ENCODE measurements at regions of chr6 and their contacts with region 1.

Region 1: DNA sequence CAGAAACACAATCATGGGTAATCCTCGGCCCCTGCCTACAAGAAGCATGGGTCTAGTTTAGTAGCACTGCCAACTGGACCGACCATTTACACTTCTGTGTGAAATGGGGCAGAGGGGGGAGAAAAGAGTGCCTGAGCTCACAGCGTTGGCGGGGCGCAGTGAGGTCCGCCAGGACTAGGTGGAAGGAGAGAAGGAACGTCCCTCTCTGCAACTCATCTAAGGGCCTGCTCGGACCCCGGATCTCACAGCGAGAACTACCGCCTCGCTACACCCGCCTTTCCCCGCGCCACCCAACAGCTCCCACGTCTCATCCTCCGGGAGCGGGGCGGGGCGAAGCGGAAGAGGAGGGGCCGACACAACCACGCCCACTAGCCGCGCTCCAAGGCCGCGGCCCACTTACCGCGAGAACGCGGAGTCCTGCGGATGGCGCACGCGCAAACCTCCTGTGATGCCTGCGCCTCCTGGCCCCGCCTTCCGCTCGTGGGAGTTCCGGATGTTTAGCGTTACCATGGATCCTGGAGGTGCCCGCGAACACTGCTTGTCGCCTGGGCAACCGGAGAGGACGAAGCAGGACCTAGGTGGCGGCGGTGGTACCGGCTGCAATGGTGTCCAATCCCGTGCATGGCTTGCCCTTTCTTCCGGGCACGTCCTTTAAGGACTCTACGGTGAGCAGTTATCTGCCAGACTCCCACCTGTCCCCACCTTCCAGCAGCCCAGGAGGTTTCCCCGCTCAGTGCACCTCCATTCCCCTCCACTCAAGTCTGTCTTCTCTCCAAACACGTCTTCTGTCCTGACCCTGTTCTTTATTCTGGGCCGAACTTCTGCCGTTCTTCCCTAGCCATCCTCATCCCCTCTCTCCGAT is at the start of gene EFHC1:
- DNase-seq: peak; percentile 98
- H3K4me3 ChIP-seq: peak within 1 kb of the TSS; percentile 85
- H3K27ac ChIP-seq: peak within 1 kb of the TSS; percentile 88
- H3K27me3 ChIP-seq: no peaks in the 10 kb centered on the region
- CTCF ChIP-seq: no peak

Region 2: DNA sequence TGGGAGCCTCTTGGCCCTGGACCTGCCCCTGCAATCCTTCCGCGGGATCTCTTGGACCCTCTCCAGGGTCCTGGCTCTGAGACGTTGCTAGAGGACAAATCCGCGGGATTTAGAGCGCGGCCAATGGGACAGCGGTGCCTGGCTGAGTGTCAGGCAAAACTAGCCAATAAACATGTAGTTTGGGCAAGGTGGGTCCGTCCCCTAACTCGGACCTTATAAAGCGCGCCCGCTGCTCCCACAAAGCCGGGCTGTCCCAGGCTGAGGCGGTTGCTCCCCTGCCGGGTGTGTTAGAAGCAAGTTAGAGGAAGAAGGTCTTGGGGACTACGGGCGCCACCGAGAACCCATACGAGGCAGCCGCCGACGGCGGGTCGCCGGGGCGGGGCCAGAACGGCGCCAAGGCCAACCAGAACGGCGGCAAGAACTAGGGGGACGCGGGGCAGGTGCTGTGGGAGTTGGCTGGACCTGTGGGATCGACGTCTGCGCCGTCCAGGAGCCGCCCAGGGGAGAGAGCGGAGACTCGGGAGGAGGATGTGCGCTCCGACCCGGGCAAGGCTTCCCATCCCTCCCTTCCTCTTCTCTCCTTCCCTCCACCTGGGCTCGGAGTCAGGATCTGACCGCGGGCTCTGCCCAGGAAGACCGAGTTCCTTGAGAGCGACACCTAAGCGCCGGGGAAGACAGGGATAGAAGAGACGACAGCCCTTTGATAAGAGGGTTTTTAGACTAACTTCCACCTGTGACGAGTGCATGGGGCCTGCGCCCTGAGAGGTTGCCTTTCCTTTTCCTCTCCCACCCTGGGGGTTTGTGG is 244.3 kb after region 1 on chr6:
- in situ Hi-C with region 1: loop called (anchors 25 kb)
- DNase-seq: peak; percentile 95
- H3K4me3 ChIP-seq: peak overlapping the region; percentile 73
- H3K27ac ChIP-seq: peak overlapping the region; percentile 31
- H3K27me3 ChIP-seq: no peaks in the 10 kb centered on the region
- CTCF ChIP-seq: no peak

Region 3: GRCh38 chr6:52681416-52681815 is 261.4 kb after region 1 on chr6:
- in situ Hi-C with region 1: no loop called
- DNase-seq: no peak
- H3K4me3 ChIP-seq: no peak overlapping the region
- H3K27ac ChIP-seq: no peak overlapping the region
- H3K27me3 ChIP-seq: no peaks in the 10 kb centered on the region
- CTCF ChIP-seq: no peak

Measured in brain microvascular endothelial cell (primary cell).